Activated CD8-positive, alpha-beta T cell treated with anti-CD3 and anti-CD28 coated beads, Interleukin-2, amount 10 ng/mL, durations not matched to agents 7 days and 5 days (primary cell): ENCODE measurements at regions of chr12 and their contacts with region 1.

Region 1: GRCh38 chr12:127108360-127109215 is 1158.4 kb upstream of the TMEM132C start:
- DNase-seq: peak; percentile 53
- ATAC-seq: no peak
- H3K4me3 Mint-ChIP-seq: no peak overlapping the region
- H3K27ac Mint-ChIP-seq: no peak overlapping the region
- H3K4me1 Mint-ChIP-seq: no peaks in the 10 kb centered on the region
- H3K27me3 Mint-ChIP-seq: no peaks in the 10 kb centered on the region

Region 2: GRCh38 chr12:126726481-126727217 is 381.9 kb before region 1 on chr12:
- CTCF ChIA-PET with region 1: no interaction called
- POLR2A ChIA-PET with region 1: no interaction called
- DNase-seq: no peak
- ATAC-seq: no peak
- H3K4me3 Mint-ChIP-seq: no peak overlapping the region
- H3K27ac Mint-ChIP-seq: no peak overlapping the region
- H3K4me1 Mint-ChIP-seq: no peaks in the 10 kb centered on the region
- H3K27me3 Mint-ChIP-seq: peaks cover 11% of the 10 kb centered on the region

Region 3: DNA sequence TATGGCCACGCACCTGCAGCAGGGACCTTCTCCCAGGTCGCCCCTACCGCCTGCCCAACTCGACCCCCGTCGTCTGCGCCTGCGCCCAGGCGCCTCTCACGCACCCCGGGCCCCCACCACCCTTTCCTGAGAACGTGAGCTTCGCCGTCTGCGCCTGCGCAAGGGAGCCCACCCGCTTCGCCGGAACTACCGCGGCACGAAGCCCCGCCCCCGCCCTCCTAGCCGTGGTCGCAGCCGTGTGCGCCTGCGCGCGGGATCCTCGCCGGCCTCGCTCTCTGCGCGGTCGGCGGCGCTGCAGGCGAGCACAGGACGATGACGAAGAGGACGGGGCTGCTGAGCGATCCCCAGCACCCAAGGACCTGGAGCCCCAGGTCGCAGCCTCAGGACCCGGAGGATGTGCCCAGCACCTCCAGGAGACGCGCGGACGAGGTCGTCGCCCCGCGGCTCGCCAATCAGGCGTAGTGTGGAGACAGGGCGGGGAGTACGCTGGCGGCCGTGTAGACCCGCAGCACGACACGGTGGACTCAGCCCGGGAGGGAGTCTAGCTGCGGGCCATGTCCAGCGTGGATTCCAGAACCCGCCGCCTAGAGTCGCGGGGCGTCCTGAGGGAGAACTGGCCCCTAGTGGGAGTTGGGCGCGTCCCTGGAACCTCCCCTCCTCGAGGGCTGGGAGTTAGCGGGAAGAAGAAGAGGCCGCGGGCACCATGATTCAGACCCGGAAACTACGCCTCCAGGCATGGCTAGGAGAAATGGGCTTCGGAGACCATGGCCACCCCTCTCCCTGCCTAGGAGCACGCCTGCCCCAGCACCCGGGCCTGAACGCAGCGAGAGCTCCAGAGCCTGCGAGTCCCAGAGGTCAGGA is 37.6 kb after region 1 on chr12:
- CTCF ChIA-PET with region 1: no interaction called
- POLR2A ChIA-PET with region 1: no interaction called
- DNase-seq: peak; percentile 66
- ATAC-seq: peak; percentile 92
- H3K4me3 Mint-ChIP-seq: peak overlapping the region; percentile 70
- H3K27ac Mint-ChIP-seq: peak overlapping the region; percentile 25
- H3K4me1 Mint-ChIP-seq: peaks cover 5% of the 10 kb centered on the region
- H3K27me3 Mint-ChIP-seq: no peaks in the 10 kb centered on the region

Region 4: DNA sequence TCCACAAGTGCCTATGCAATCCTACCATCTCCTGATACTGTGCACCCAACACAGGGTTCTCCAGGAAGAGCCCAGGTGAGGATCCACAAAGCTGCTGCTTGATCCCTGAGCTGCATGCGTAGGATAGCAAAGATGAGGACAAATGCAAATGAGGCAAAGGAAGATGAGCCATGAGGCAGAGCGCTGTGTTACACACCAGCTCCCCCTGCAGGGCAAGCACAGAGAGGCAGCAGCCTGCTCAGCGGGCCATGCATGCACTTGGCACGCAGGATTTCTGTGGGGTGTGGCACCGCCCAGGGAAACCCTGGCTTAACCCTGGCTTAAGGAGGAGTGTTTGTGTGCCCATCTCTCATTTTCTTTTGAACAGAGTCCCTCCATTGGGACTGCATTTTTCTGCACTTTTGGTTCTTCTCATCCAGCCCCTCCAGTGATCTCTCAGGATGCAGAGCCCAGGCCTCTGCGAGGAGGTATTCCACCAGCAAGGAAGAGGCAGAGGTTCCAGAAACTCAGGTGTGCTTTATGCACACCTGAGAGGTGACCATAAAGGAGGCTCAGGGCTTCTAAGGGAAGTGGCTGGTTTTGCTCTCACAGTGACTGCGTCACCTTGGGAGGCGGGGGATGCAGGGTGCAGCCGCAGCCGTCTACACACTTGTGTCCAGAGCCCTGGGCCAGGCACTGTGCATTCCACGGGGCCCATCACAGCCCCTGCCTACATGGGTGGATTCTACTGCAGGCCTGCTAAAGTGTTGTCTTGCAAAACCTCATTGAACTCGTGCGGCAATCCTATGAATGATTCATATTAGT is 185.1 kb after region 1 on chr12:
- CTCF ChIA-PET with region 1: interaction called, 10 read pairs
- POLR2A ChIA-PET with region 1: no interaction called
- DNase-seq: peak; percentile 48
- ATAC-seq: peak; percentile 64
- H3K4me3 Mint-ChIP-seq: no peak overlapping the region
- H3K27ac Mint-ChIP-seq: no peak overlapping the region
- H3K4me1 Mint-ChIP-seq: no peaks in the 10 kb centered on the region
- H3K27me3 Mint-ChIP-seq: no peaks in the 10 kb centered on the region

Region 5: GRCh38 chr12:127381048-127381668 is 272.6 kb after region 1 on chr12:
- CTCF ChIA-PET with region 1: interaction called, 19 read pairs
- POLR2A ChIA-PET with region 1: no interaction called
- DNase-seq: peak; percentile 40
- ATAC-seq: peak; percentile 73
- H3K4me3 Mint-ChIP-seq: no peak overlapping the region
- H3K27ac Mint-ChIP-seq: no peak overlapping the region
- H3K4me1 Mint-ChIP-seq: no peaks in the 10 kb centered on the region
- H3K27me3 Mint-ChIP-seq: peaks cover 3% of the 10 kb centered on the region